HepG2 (cell line): ENCODE measurements at regions of chrX and their contacts with region 1.

Region 1: DNA sequence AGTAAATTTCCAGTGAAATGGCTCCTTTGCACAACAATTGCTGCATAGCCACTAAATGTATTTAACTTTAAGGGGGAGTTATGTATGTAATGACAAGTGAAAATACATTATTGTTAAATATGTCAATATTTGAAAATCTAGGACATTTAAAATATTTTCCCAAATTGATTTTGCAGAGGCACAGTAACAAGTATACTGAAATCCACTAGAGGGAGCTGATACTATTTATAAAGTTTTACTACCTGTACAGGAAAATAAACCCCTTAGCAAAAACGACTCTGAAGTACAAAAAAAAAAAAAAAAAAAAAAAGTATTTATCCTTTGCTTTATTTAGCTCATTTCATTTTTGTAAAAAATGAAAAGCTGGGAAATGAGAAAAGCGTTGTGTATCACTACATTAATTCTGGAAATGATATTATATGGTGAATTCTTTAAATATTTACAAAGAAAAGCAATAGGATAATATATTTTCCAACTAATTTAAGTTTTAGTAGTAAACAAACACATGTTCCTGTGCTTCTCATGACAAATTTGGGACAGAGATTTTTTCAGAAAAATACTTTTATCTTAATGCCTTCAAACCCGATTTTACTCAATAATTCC is 727.7 kb downstream of the DMD start:
- DNase-seq: no peak
- ATAC-seq: no peak
- H3K4me3 ChIP-seq: no peak overlapping the region
- H3K27ac ChIP-seq: no peak overlapping the region
- H3K4me1 ChIP-seq: no peaks in the 10 kb centered on the region
- H3K27me3 ChIP-seq: no peaks in the 10 kb centered on the region
- CTCF ChIP-seq: no peak
- EP300 ChIP-seq: no peak
- POLR2A ChIP-seq: no peak
- RAD21 ChIP-seq: no peak

Region 2: GRCh38 chrX:32451954-32452518 is 31.6 kb before region 1 on chrX:
- CTCF ChIA-PET with region 1: no interaction called
- POLR2A ChIA-PET with region 1: no interaction called
- in situ Hi-C with region 1: no loop called
- intact Hi-C with region 1: no loop called
- DNase-seq: no peak
- ATAC-seq: no peak
- H3K4me3 ChIP-seq: no peak overlapping the region
- H3K27ac ChIP-seq: no peak overlapping the region
- H3K4me1 ChIP-seq: no peaks in the 10 kb centered on the region
- H3K27me3 ChIP-seq: no peaks in the 10 kb centered on the region
- CTCF ChIP-seq: no peak
- EP300 ChIP-seq: no peak
- POLR2A ChIP-seq: no peak
- RAD21 ChIP-seq: no peak

Region 3: DNA sequence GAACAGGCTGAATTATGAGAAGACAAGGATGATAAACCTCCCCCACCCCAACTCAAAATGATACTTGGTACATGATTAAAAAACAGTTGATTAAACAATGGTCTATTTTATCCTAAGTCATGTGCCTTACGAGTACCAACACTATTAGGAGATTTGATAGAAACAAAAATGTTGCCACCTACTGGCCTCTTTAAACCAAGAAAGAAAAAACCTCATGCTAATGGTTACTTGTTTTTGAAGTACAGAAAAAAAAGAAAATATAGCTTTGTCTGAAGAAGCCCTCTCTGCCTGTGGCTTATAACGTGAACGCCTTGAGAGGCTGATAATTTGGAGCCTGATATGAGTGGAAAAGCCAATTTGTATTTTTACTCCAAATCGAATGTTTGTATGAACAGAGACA is 189.6 kb after region 1 on chrX:
- CTCF ChIA-PET with region 1: no interaction called
- POLR2A ChIA-PET with region 1: no interaction called
- in situ Hi-C with region 1: no loop called
- intact Hi-C with region 1: loop called (anchors 5 kb)
- DNase-seq: peak; percentile 0
- ATAC-seq: no peak
- H3K4me3 ChIP-seq: no peak overlapping the region
- H3K27ac ChIP-seq: no peak overlapping the region
- H3K4me1 ChIP-seq: no peaks in the 10 kb centered on the region
- H3K27me3 ChIP-seq: no peaks in the 10 kb centered on the region
- CTCF ChIP-seq: no peak
- EP300 ChIP-seq: no peak
- POLR2A ChIP-seq: no peak
- RAD21 ChIP-seq: no peak

Region 4: GRCh38 chrX:33109858-33110257 is 626.2 kb after region 1 on chrX:
- CTCF ChIA-PET with region 1: no interaction called
- POLR2A ChIA-PET with region 1: no interaction called
- in situ Hi-C with region 1: no loop called
- intact Hi-C with region 1: no loop called
- DNase-seq: peak; percentile 0
- ATAC-seq: no peak; the same call in 2 of the 3 replicates
- H3K4me3 ChIP-seq: no peak overlapping the region
- H3K27ac ChIP-seq: no peak overlapping the region
- H3K4me1 ChIP-seq: no peaks in the 10 kb centered on the region
- H3K27me3 ChIP-seq: no peaks in the 10 kb centered on the region
- CTCF ChIP-seq: no peak
- EP300 ChIP-seq: no peak
- POLR2A ChIP-seq: no peak
- RAD21 ChIP-seq: no peak

Region 5: GRCh38 chrX:33336783-33337182 is 853.1 kb after region 1 on chrX:
- CTCF ChIA-PET with region 1: no interaction called
- POLR2A ChIA-PET with region 1: no interaction called
- in situ Hi-C with region 1: no loop called
- intact Hi-C with region 1: loop called (anchors 2 kb)
- DNase-seq: peak; percentile 2
- ATAC-seq: peak; percentile 73
- H3K4me3 ChIP-seq: no peak overlapping the region
- H3K27ac ChIP-seq: no peak overlapping the region
- H3K4me1 ChIP-seq: no peaks in the 10 kb centered on the region
- H3K27me3 ChIP-seq: no peaks in the 10 kb centered on the region
- CTCF ChIP-seq: peak; percentile 44
- EP300 ChIP-seq: no peak
- POLR2A ChIP-seq: no peak
- RAD21 ChIP-seq: no peak